Natural killer cell (primary cell): ENCODE measurements at regions of chr3 and their contacts with region 1.

Region 1: GRCh38 chr3:129160891-129161859 is at the start of gene ISY1:
- DNase-seq: peak; percentile 79 to 97
- ATAC-seq: peak; percentile 78 to 90 (median 86)
- H3K4me3 ChIP-seq: peak within 1 kb of the TSS; percentile 65
- H3K4me3 Mint-ChIP-seq: peak within 1 kb of the TSS; percentile 98
- H3K27ac ChIP-seq: peak within 1 kb of the TSS; percentile 87
- H3K27ac Mint-ChIP-seq: peak within 1 kb of the TSS; percentile 96 to 99
- H3K4me1 ChIP-seq: peaks cover 15% of the 10 kb centered on the region
- H3K4me1 Mint-ChIP-seq: peaks cover 37 to 39% of the 10 kb centered on the region in 2 donors
- H3K27me3 ChIP-seq: no peaks in the 10 kb centered on the region
- H3K27me3 Mint-ChIP-seq: no peaks in the 10 kb centered on the region
- CTCF ChIP-seq: peak; percentile 62
- total RNA-seq, gene ISY1: 51.9 to 58.2 (median 56.1) TPM

Region 2: DNA sequence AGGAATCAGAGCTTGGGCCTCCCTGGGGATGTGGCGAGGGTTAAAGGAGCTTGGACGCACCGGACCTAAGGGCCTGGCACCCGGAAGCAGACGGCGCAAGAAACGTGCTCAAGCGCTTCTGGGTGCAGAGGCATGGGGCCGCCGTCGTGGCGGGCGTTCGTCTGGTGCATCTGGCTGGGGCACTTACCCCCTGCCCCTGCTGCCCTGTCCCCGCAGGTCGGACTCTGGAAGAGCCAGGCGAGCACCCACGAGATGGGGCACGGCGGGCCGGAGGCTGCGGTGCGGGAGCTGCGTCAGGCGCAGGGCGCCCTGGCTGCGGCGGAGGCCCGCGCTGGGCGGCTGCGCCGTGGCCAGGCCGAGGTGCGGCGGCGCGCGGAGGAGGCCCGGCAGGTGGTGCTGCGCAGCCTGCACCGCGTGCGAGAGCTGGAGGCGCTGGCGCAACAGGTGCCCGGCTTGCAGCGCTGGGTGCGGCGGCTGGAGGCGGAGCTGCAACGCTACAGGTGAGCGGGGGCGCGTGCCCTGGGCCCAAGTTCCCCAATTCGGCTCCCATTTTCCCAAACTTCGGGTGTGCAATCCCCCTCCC is 157.5 kb before region 1 on chr3:
- intact Hi-C with region 1: no loop called
- DNase-seq: peak in 1 of 2 donors; percentile 83
- ATAC-seq: peak; percentile 76 to 88 (median 87)
- H3K4me3 ChIP-seq: no peak overlapping the region
- H3K4me3 Mint-ChIP-seq: peak overlapping the region; percentile 71
- H3K27ac ChIP-seq: no peak overlapping the region
- H3K27ac Mint-ChIP-seq: no peak overlapping the region
- H3K4me1 ChIP-seq: peaks cover 31% of the 10 kb centered on the region
- H3K4me1 Mint-ChIP-seq: peaks cover 26 to 40% of the 10 kb centered on the region in 2 donors
- H3K27me3 ChIP-seq: peaks cover 29% of the 10 kb centered on the region
- H3K27me3 Mint-ChIP-seq: peaks cover 27 to 40% of the 10 kb centered on the region in 2 donors
- CTCF ChIP-seq: peak; percentile 16

Region 3: DNA sequence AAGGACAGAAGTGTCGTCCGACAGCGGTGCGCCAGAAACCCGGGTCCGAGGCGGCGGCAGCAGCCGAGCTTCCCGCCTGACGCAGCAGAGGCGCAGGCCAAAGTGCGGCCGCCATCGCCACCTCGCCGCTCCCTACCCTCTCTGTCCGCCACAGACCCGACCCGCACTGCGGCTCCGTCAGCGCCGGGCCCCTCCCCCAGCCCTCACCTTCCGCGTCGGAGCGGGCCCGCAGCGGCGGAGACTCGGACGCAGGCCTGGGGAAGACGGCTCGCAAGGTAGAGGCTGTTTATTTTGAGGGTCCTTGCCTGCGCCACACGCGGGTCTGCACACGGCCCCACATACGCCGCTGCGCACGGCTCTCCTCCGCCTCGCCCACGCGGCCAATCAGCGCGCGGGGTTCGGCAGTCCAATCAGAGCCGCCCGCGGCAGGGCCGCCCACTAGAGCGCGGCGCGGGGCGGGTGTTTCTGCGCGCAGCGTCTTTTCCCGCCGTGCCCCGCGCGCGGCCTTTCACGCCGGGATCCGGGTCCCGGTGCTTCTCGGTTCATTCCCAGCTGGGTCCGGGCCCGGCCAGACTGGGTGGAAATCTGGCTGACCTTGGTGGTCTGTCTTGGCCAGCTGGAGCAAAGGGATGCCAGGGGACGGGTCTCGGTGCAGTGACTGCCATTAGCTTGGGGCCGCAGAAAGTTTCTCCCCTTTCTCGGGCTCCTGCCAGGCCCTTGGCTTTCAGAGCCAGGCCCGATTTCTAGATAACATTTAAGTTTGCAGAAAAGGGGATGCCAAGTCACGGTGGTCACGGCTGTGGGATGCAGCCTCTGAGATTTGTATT is 22.6 kb after region 1 on chr3 and contains the start of gene CNBP:
- intact Hi-C with region 1: loop called (anchors 1 kb)
- DNase-seq: peak; percentile 95 to 96
- ATAC-seq: peak; percentile 95 to 100 (median 97)
- H3K4me3 ChIP-seq: peak within 1 kb of the TSS; percentile 95
- H3K4me3 Mint-ChIP-seq: peak within 1 kb of the TSS; percentile 91
- H3K27ac ChIP-seq: peak within 1 kb of the TSS; percentile 93
- H3K27ac Mint-ChIP-seq: peak within 1 kb of the TSS; percentile 84 to 100
- H3K4me1 ChIP-seq: peaks cover 42% of the 10 kb centered on the region
- H3K4me1 Mint-ChIP-seq: peaks cover 39 to 47% of the 10 kb centered on the region in 2 donors
- H3K27me3 ChIP-seq: no peaks in the 10 kb centered on the region
- H3K27me3 Mint-ChIP-seq: no peaks in the 10 kb centered on the region
- CTCF ChIP-seq: no peak
- total RNA-seq, gene CNBP: 202 to 223 (median 211) TPM